ENCODE measurements at regions of chr11 and their contacts with region 1.

Region 1: GRCh38 chr11:19351426-19351825 is 110.7 kb upstream of the E2F8 start:
- DNase-seq: no peak
- ATAC-seq: no peak
- H3K4me3 ChIP-seq: no peak overlapping the region
- H3K27ac ChIP-seq: no peak overlapping the region
- H3K4me1 ChIP-seq: no peaks in the 10 kb centered on the region
- H3K27me3 ChIP-seq: peaks cover 58% of the 10 kb centered on the region
- CTCF ChIP-seq: no peak

Region 2: GRCh38 chr11:19110280-19110679 is 241.1 kb before region 1 on chr11:
- CTCF ChIA-PET with region 1: interaction called, 19 read pairs
- POLR2A ChIA-PET with region 1: no interaction called
- in situ Hi-C with region 1: no loop called
- intact Hi-C with region 1: no loop called
- DNase-seq: no peak
- ATAC-seq: no peak
- H3K4me3 ChIP-seq: no peak overlapping the region
- H3K27ac ChIP-seq: no peak overlapping the region
- H3K4me1 ChIP-seq: no peaks in the 10 kb centered on the region
- H3K27me3 ChIP-seq: peaks cover 2% of the 10 kb centered on the region; the same call in 1 of the 2 replicates
- CTCF ChIP-seq: no peak

Region 3: DNA sequence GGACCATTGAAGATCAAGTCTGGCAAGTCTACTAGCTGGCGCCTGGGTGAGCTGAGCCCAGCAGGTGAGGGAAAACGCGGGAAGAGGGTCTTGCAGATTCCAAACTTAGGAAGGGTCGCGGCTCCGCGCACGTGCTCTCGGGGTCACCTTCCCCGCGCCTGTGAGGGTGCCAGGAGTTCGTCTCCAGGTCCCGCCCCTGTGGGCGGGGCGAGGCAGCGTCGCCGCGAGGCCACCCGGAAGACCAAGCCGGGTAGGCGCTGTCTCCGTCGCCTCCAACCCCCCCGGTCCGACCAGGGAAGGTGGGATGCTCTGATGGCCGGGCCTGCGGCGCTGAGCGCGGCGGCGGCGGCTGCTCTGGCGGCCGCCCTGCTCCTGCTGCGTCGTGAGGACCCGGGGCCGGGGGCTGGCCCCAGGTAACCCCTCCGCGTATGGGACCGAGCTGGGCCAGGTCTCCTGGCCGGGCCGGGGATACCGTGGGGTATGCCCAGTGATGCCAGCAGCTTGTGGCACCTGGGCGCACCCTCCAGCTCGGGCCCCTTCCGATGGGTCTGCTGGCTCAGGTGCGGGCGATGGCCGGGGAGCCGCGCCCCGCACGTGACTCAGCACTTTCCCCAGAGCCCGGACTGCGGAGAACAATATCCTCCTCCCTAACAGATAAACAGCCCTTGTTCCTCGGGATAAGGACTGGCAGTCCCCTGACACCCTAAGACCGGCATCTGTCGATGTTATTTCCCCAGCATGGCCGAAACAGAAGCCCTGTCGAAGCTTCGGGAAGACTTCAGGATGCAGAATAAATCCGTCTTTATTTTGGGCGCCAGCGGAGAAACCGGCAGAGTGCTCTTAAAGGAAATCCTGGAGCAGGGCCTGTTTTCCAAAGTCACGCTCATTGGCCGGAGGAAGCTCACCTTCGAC is 1012.3 kb after region 1 on chr11 and contains the start of gene HTATIP2:
- CTCF ChIA-PET with region 1: no interaction called
- POLR2A ChIA-PET with region 1: no interaction called
- in situ Hi-C with region 1: no loop called
- intact Hi-C with region 1: no loop called
- DNase-seq: no peak
- ATAC-seq: peak; percentile 92
- H3K4me3 ChIP-seq: peak within 1 kb of the TSS; percentile 70 to 89
- H3K27ac ChIP-seq: peak within 1 kb of the TSS; percentile 95
- H3K4me1 ChIP-seq: peaks cover 40% of the 10 kb centered on the region
- H3K27me3 ChIP-seq: no peaks in the 10 kb centered on the region
- CTCF ChIP-seq: no peak
- total RNA-seq, gene HTATIP2: 68.9 TPM

Measured in Panc1 (cell line).